ENCODE measurements at regions of chr7 and their contacts with region 1.

Region 1: GRCh38 chr7:28955718-28956619 is 2.2 kb downstream of the TRIL start:
- DNase-seq: peak in 1 of 2 experiments; percentile 92
- H3K4me3 ChIP-seq: peak overlapping the region; percentile 46 to 74 (median 62)
- H3K27ac ChIP-seq: no peak overlapping the region
- H3K4me1 ChIP-seq: peaks cover 3 to 21% (median 16%) of the 10 kb centered on the region in 4 experiments
- H3K27me3 ChIP-seq: peaks cover 11 to 46% (median 38%) of the 10 kb centered on the region in 4 experiments
- CTCF ChIP-seq: peak in 2 of 3 experiments; percentile 94 to 98; a peak in 3 of 4 replicates
- EP300 ChIP-seq: no peak
- POLR2A ChIP-seq: no peak; a peak in 1 of 3 replicates
- RAD21 ChIP-seq: peak; percentile 60 to 77

Region 2: GRCh38 chr7:28784171-28784902 is 171.6 kb before region 1 on chr7:
- CTCF ChIA-PET with region 1: no interaction called
- POLR2A ChIA-PET with region 1: no interaction called
- DNase-seq: no peak
- H3K4me3 ChIP-seq: no peak overlapping the region
- H3K27ac ChIP-seq: no peak overlapping the region
- H3K4me1 ChIP-seq: no peaks in the 10 kb centered on the region
- H3K27me3 ChIP-seq: no peaks in the 10 kb centered on the region
- CTCF ChIP-seq: no peak
- EP300 ChIP-seq: no peak
- POLR2A ChIP-seq: no peak
- RAD21 ChIP-seq: no peak

Region 3: GRCh38 chr7:28904578-28905048 is 51.4 kb before region 1 on chr7:
- CTCF ChIA-PET with region 1: no interaction called
- POLR2A ChIA-PET with region 1: no interaction called
- DNase-seq: no peak
- H3K4me3 ChIP-seq: no peak overlapping the region
- H3K27ac ChIP-seq: no peak overlapping the region
- H3K4me1 ChIP-seq: peaks cover 0 to 16% (median 3%) of the 10 kb centered on the region in 4 experiments; a peak in 2 of 7 replicates
- H3K27me3 ChIP-seq: no peaks in the 10 kb centered on the region
- CTCF ChIP-seq: no peak
- EP300 ChIP-seq: no peak
- POLR2A ChIP-seq: no peak
- RAD21 ChIP-seq: no peak

Region 4: GRCh38 chr7:28926871-28927597 is 28.9 kb before region 1 on chr7:
- CTCF ChIA-PET with region 1: interaction called, 576 read pairs
- POLR2A ChIA-PET with region 1: interaction called, 9 read pairs
- DNase-seq: peak in 1 of 2 experiments; percentile 66
- H3K4me3 ChIP-seq: peak overlapping the region; percentile 24 to 62 (median 40); a peak in 6 of 8 replicates
- H3K27ac ChIP-seq: no peak overlapping the region
- H3K4me1 ChIP-seq: peaks cover 0 to 8% (median 1%) of the 10 kb centered on the region in 4 experiments; a peak in 3 of 7 replicates
- H3K27me3 ChIP-seq: no peaks in the 10 kb centered on the region
- CTCF ChIP-seq: peak in 2 of 3 experiments; percentile 69 to 81; a peak in 3 of 4 replicates
- EP300 ChIP-seq: no peak
- POLR2A ChIP-seq: 0 out of 3 replicates have a peak, but pooled peaks of 1 of the 2 experiments have one; percentile 44
- RAD21 ChIP-seq: peak; percentile 74 to 79

Region 5: GRCh38 chr7:28939844-28940544 is 16.0 kb before region 1 on chr7:
- CTCF ChIA-PET with region 1: interaction called, 53 read pairs
- POLR2A ChIA-PET with region 1: no interaction called
- DNase-seq: no peak
- H3K4me3 ChIP-seq: no peak overlapping the region
- H3K27ac ChIP-seq: no peak overlapping the region
- H3K4me1 ChIP-seq: no peaks in the 10 kb centered on the region
- H3K27me3 ChIP-seq: no peaks in the 10 kb centered on the region
- CTCF ChIP-seq: no peak
- EP300 ChIP-seq: no peak
- POLR2A ChIP-seq: no peak
- RAD21 ChIP-seq: no peak

Region 6: DNA sequence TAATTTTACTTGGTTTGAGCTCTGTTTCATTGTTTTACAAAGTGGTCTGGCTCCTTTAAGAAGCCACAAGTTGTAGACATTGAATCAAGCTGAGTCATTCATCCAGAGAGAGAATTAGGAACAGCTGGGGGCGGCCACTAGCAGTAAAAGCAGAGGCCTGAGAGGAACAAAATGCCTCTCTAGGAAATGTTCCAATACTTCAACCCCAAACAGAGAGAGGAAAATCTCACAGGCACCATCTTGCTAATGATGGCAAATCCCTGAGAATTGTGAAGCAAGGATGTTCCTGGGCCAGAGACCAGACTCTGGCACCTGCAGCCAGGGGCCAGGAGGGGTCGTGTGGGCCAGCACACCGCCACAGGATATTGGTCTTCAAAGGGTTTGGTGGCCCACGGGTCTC is 28.7 kb after region 1 on chr7:
- CTCF ChIA-PET with region 1: interaction called, 59 read pairs
- POLR2A ChIA-PET with region 1: interaction called, 7 read pairs
- DNase-seq: no peak
- H3K4me3 ChIP-seq: peak overlapping the region in 1 of 4 experiments; percentile 23; a peak in 1 of 8 replicates
- H3K27ac ChIP-seq: peak overlapping the region; percentile 32; the same call in 1 of the 2 replicates
- H3K4me1 ChIP-seq: peaks cover 5 to 12% (median 10%) of the 10 kb centered on the region in 4 experiments
- H3K27me3 ChIP-seq: no peaks in the 10 kb centered on the region
- CTCF ChIP-seq: peak in 2 of 3 experiments; percentile 12 to 20; a peak in 2 of 4 replicates
- EP300 ChIP-seq: no peak
- POLR2A ChIP-seq: no peak
- RAD21 ChIP-seq: no peak; a peak in 1 of 4 replicates

Region 7: DNA sequence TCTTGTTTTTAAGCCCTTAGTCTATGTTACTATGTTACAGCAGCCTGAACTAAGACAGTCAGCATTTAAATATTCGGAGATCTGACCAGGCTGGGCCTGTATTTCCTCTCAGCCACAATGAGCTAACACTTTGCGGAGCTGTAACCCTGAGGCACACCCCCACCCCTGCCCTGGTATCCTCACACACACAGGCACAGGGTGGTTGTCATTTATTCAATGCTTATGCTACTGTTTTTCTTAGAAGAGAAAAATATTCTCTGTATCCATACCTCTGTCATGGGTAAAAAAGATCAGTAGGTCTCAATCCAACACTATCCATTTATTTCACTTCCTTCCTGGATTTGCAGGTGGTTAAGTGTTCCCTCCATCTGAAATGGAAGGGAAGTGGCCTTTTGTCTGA is 82.5 kb after region 1 on chr7:
- CTCF ChIA-PET with region 1: interaction called, 12 read pairs
- POLR2A ChIA-PET with region 1: no interaction called
- DNase-seq: no peak
- H3K4me3 ChIP-seq: no peak overlapping the region
- H3K27ac ChIP-seq: no peak overlapping the region
- H3K4me1 ChIP-seq: peaks cover 0 to 3% (median 2%) of the 10 kb centered on the region in 4 experiments; a peak in 1 of 7 replicates
- H3K27me3 ChIP-seq: no peaks in the 10 kb centered on the region
- CTCF ChIP-seq: no peak
- EP300 ChIP-seq: no peak
- POLR2A ChIP-seq: no peak
- RAD21 ChIP-seq: no peak

Region 8: GRCh38 chr7:29091715-29092114 is 135.7 kb after region 1 on chr7:
- CTCF ChIA-PET with region 1: interaction called, 136 read pairs
- POLR2A ChIA-PET with region 1: no interaction called
- DNase-seq: no peak
- H3K4me3 ChIP-seq: no peak overlapping the region
- H3K27ac ChIP-seq: no peak overlapping the region
- H3K4me1 ChIP-seq: peaks cover 0 to 2% (median 0%) of the 10 kb centered on the region in 4 experiments; a peak in 2 of 7 replicates
- H3K27me3 ChIP-seq: no peaks in the 10 kb centered on the region
- CTCF ChIP-seq: no peak
- EP300 ChIP-seq: no peak
- POLR2A ChIP-seq: no peak
- RAD21 ChIP-seq: no peak

Region 9: DNA sequence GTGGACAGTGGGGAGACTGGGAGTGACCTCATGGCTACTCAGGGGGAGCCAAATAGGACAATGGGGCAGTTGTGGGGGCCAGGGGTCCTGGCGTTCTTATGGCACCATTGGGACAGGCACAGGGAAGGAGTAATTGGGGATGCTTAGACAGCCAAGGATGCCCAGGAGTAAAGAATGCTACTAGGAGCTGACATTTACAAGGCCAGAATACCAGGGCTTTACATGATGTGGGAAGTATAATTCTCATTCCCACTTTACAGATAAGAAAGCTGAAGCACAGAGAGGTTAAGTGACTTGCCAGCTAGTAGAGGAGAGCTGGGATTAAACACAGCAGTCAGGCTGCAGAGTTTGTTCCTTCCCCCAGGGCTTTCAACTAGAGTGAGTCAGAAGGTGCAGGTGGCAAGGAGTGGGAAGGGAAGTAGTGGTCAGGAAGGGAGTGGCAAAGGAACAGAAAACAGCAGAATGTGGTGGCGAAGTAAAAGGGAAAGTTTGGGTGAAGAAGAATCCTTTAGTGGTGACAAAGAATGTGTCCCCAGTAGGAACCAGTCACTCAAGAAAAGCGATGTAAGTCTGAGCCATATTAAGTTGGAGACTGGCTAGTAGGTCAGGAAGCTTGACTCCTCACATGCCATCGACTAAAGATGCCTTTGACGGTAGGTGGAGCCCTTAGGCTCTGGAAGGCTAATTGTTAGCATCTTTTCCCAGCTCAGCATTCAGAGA is 157.6 kb after region 1 on chr7:
- CTCF ChIA-PET with region 1: interaction called, 38 read pairs
- POLR2A ChIA-PET with region 1: no interaction called
- DNase-seq: peak in 1 of 2 experiments; percentile 27
- H3K4me3 ChIP-seq: no peak overlapping the region
- H3K27ac ChIP-seq: no peak overlapping the region
- H3K4me1 ChIP-seq: peaks cover 2 to 3% (median 3%) of the 10 kb centered on the region in 4 experiments; a peak in 4 of 7 replicates
- H3K27me3 ChIP-seq: no peaks in the 10 kb centered on the region
- CTCF ChIP-seq: peak; percentile 21 to 76 (median 67)
- EP300 ChIP-seq: no peak
- POLR2A ChIP-seq: no peak
- RAD21 ChIP-seq: peak; percentile 80 to 83

Measured in H1 (cell line).